ENCODE measurements at regions of chr10 and their contacts with region 1.

Region 1: GRCh38 chr10:63166742-63167258 is 33.7 kb downstream of the NRBF2 start:
- DNase-seq: peak; percentile 64
- H3K4me3 Mint-ChIP-seq: no peak overlapping the region
- H3K27ac Mint-ChIP-seq: no peak overlapping the region
- H3K4me1 Mint-ChIP-seq: peaks cover 43% of the 10 kb centered on the region
- H3K27me3 Mint-ChIP-seq: no peaks in the 10 kb centered on the region

Region 2: DNA sequence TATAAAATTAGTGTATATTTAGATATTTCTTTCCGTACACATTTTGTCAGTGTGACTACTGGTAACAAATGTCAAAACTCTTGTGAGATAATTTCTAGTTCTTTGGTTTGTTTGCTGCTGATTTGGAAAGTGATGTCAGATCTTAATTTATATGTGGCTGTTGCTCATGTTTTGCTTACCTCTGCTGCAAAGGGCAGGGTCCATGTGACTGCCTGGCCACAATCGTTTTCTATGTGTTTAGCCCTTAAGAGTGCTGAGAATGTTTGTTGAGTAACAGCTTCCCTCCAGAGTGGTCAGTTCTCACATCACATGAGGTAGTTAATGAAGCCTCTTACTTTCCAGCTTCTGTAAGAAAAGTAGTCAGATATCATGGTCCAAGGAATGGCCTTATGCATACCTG is 29.5 kb before region 1 on chr10:
- CTCF ChIA-PET with region 1: interaction called, 12 read pairs
- POLR2A ChIA-PET with region 1: interaction called, 4 read pairs
- DNase-seq: no peak
- H3K4me3 Mint-ChIP-seq: no peak overlapping the region
- H3K27ac Mint-ChIP-seq: no peak overlapping the region
- H3K4me1 Mint-ChIP-seq: peaks cover 49% of the 10 kb centered on the region
- H3K27me3 Mint-ChIP-seq: no peaks in the 10 kb centered on the region

Region 3: GRCh38 chr10:63221950-63222349 is 55.1 kb after region 1 on chr10:
- CTCF ChIA-PET with region 1: no interaction called
- POLR2A ChIA-PET with region 1: no interaction called
- DNase-seq: no peak
- H3K4me3 Mint-ChIP-seq: no peak overlapping the region
- H3K27ac Mint-ChIP-seq: peak overlapping the region; percentile 14
- H3K4me1 Mint-ChIP-seq: peaks cover 61% of the 10 kb centered on the region
- H3K27me3 Mint-ChIP-seq: no peaks in the 10 kb centered on the region

Region 4: DNA sequence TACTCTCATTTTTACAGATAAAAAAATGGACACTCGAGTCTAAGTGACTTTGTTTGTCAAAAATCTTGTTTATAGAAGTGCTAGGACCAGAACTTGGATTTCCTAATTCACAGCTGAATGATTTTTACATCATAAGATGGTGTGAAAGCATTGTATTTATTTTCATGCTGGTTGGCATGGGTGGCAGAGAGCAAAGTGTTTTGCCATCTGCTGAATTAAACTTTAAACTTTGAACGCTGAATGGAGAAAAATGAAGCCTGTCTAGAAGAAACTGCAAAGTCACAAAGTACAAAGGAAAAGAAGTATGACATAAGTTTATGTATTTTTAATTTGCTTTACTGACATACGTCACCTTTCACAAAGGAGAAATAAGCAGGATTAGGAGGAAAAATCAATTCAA is 108.3 kb after region 1 on chr10:
- CTCF ChIA-PET with region 1: no interaction called
- POLR2A ChIA-PET with region 1: no interaction called
- DNase-seq: no peak
- H3K4me3 Mint-ChIP-seq: no peak overlapping the region
- H3K27ac Mint-ChIP-seq: no peak overlapping the region
- H3K4me1 Mint-ChIP-seq: peaks cover 28% of the 10 kb centered on the region
- H3K27me3 Mint-ChIP-seq: no peaks in the 10 kb centered on the region

Region 5: GRCh38 chr10:63629363-63630084 is 462.7 kb after region 1 on chr10:
- CTCF ChIA-PET with region 1: interaction called, 42 read pairs
- POLR2A ChIA-PET with region 1: no interaction called
- DNase-seq: peak; percentile 84
- H3K4me3 Mint-ChIP-seq: peak overlapping the region; percentile 81
- H3K27ac Mint-ChIP-seq: peak overlapping the region; percentile 90
- H3K4me1 Mint-ChIP-seq: peaks cover 49% of the 10 kb centered on the region
- H3K27me3 Mint-ChIP-seq: peaks cover 1% of the 10 kb centered on the region

Region 6: GRCh38 chr10:63720072-63720537 is 553.3 kb after region 1 on chr10:
- CTCF ChIA-PET with region 1: interaction called, 30 read pairs
- POLR2A ChIA-PET with region 1: interaction called, 3 read pairs
- DNase-seq: peak; percentile 58
- H3K4me3 Mint-ChIP-seq: no peak overlapping the region
- H3K27ac Mint-ChIP-seq: no peak overlapping the region
- H3K4me1 Mint-ChIP-seq: peaks cover 25% of the 10 kb centered on the region
- H3K27me3 Mint-ChIP-seq: peaks cover 6% of the 10 kb centered on the region

Measured in activated CD4-positive, alpha-beta T cell treated with anti-CD3 and anti-CD28 coated beads, Interleukin-2, amount 10 ng/mL, durations not matched to agents 7 days and 5 days (primary cell).